ENCODE measurements at regions of chr15 and their contacts with region 1.

Region 1: GRCh38 chr15:77543159-77543882 is 89.4 kb downstream of the LINGO1 start:
- DNase-seq: peak; percentile 54 to 85 (median 66)
- ATAC-seq: peak; percentile 94
- H3K4me3 ChIP-seq: peak overlapping the region; percentile 65
- H3K4me3 Mint-ChIP-seq: peak overlapping the region; percentile 80
- H3K27ac ChIP-seq: no peak overlapping the region
- H3K27ac Mint-ChIP-seq: no peak overlapping the region
- H3K4me1 ChIP-seq: peaks cover 13% of the 10 kb centered on the region
- H3K4me1 Mint-ChIP-seq: peaks cover 5% of the 10 kb centered on the region
- H3K27me3 ChIP-seq: no peaks in the 10 kb centered on the region
- H3K27me3 Mint-ChIP-seq: no peaks in the 10 kb centered on the region
- CTCF ChIP-seq: peak; percentile 88

Region 2: GRCh38 chr15:76190834-76191538 is 1352.3 kb before region 1 on chr15:
- CTCF ChIA-PET with region 1: no interaction called
- POLR2A ChIA-PET with region 1: no interaction called
- intact Hi-C with region 1: loop called in 1 of 2 experiments (anchors 5 kb)
- DNase-seq: peak; percentile 29 to 74 (median 56)
- ATAC-seq: peak; percentile 84
- H3K4me3 ChIP-seq: peak overlapping the region; percentile 7
- H3K4me3 Mint-ChIP-seq: no peak overlapping the region
- H3K27ac ChIP-seq: no peak overlapping the region
- H3K27ac Mint-ChIP-seq: no peak overlapping the region
- H3K4me1 ChIP-seq: peaks cover 13% of the 10 kb centered on the region
- H3K4me1 Mint-ChIP-seq: peaks cover 7% of the 10 kb centered on the region
- H3K27me3 ChIP-seq: peaks cover 28% of the 10 kb centered on the region in 2 experiments
- H3K27me3 Mint-ChIP-seq: peaks cover 45% of the 10 kb centered on the region
- CTCF ChIP-seq: peak; percentile 91

Region 3: DNA sequence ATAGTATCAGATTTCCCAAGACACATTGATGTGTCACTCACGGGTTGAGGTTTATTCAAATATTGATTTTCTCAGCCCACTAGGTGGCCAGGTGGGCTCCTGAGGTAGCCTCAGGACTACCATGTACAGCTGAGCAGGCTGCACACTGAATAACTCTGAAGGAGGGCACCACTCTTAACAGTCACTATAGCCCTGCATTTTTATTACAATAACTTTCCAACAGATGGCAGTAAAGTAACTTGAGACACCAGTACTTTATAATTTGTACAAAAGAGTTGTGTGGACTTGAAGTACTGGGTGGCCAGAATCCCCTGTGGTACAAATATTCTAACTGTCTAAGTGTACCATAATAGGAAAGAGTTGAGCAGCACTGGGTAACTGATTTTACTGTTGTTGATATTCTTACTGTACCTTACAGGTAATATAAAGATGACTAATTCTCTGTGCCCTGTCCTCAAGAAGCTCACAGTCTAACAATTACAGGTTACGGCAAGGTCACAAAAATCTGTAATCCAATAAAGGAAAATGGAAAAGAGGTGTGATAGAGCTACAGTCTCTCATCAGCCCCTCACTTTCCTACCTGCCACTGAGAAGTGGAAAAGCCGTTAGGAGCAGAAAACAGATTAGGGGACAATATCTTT is 1308.0 kb before region 1 on chr15:
- CTCF ChIA-PET with region 1: no interaction called
- POLR2A ChIA-PET with region 1: no interaction called
- intact Hi-C with region 1: loop called in 1 of 2 experiments (anchors 5 kb)
- DNase-seq: peak in 3 of 14 experiments; percentile 44 to 52 (median 45)
- ATAC-seq: no peak
- H3K4me3 ChIP-seq: no peak overlapping the region
- H3K4me3 Mint-ChIP-seq: no peak overlapping the region
- H3K27ac ChIP-seq: no peak overlapping the region
- H3K27ac Mint-ChIP-seq: no peak overlapping the region
- H3K4me1 ChIP-seq: no peaks in the 10 kb centered on the region
- H3K4me1 Mint-ChIP-seq: no peaks in the 10 kb centered on the region
- H3K27me3 ChIP-seq: no peaks in the 10 kb centered on the region
- H3K27me3 Mint-ChIP-seq: no peaks in the 10 kb centered on the region
- CTCF ChIP-seq: peak; percentile 62

Region 4: DNA sequence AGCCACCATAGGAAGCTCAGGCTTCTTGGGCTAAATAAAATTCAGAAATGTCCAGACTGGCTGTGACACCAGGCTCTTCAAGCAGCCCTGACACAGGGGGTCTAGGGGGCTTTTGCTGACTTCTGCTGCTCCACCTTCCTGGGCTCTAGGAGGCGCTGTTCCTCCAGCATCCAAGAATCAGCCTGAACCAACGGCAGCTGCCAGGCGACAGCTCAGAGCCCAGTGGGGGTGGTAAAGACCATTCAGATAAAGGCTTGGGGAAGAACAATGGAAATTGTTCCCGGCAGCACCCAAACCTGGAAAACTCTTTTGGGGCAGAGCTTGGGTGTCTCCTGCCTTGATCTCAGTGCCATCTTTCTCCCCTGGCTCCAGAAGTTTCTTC is 570.0 kb before region 1 on chr15:
- CTCF ChIA-PET with region 1: interaction called, 5 read pairs
- POLR2A ChIA-PET with region 1: no interaction called
- intact Hi-C with region 1: loop called in 1 of 2 experiments (anchors 2 kb)
- DNase-seq: peak; percentile 50 to 83 (median 60)
- ATAC-seq: peak; percentile 81
- H3K4me3 ChIP-seq: no peak overlapping the region
- H3K4me3 Mint-ChIP-seq: no peak overlapping the region
- H3K27ac ChIP-seq: no peak overlapping the region
- H3K27ac Mint-ChIP-seq: no peak overlapping the region
- H3K4me1 ChIP-seq: peaks cover 17% of the 10 kb centered on the region
- H3K4me1 Mint-ChIP-seq: no peaks in the 10 kb centered on the region
- H3K27me3 ChIP-seq: no peaks in the 10 kb centered on the region
- H3K27me3 Mint-ChIP-seq: no peaks in the 10 kb centered on the region
- CTCF ChIP-seq: peak; percentile 76

Region 5: DNA sequence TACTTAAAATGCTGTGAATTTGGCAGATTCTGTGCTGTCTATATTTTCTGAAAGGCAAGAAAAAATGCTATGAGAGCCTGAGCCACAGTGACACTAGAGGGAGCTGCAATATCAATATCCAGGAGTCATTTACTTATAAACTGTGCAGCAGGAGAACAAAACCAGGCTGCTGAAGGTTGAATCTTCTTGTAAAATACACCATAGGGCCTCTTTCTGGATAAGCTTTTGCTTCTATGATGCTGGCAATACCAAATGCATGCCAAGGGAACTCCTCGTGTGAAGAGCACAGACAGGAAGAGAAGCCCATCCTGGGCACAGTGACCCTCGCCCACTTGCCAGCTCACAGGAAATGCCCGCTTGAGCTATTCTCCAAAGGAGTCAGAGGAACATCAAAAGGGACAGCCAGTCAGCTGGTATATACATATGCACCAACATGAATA is 424.4 kb before region 1 on chr15:
- CTCF ChIA-PET with region 1: interaction called, 3 read pairs
- POLR2A ChIA-PET with region 1: interaction called, 4 read pairs
- intact Hi-C with region 1: loop called in 1 of 2 experiments (anchors 1 kb)
- DNase-seq: peak in 7 of 14 experiments; percentile 9 to 73 (median 47)
- ATAC-seq: peak; percentile 59
- H3K4me3 ChIP-seq: no peak overlapping the region
- H3K4me3 Mint-ChIP-seq: no peak overlapping the region
- H3K27ac ChIP-seq: no peak overlapping the region
- H3K27ac Mint-ChIP-seq: no peak overlapping the region
- H3K4me1 ChIP-seq: peaks cover 4% of the 10 kb centered on the region
- H3K4me1 Mint-ChIP-seq: no peaks in the 10 kb centered on the region
- H3K27me3 ChIP-seq: no peaks in the 10 kb centered on the region
- H3K27me3 Mint-ChIP-seq: no peaks in the 10 kb centered on the region
- CTCF ChIP-seq: peak; percentile 65

Region 6: GRCh38 chr15:77186594-77187011 is 356.7 kb before region 1 on chr15:
- CTCF ChIA-PET with region 1: interaction called, 6 read pairs
- POLR2A ChIA-PET with region 1: no interaction called
- intact Hi-C with region 1: loop called (anchors 2 kb)
- DNase-seq: peak in 3 of 14 experiments; percentile 35 to 44 (median 40)
- ATAC-seq: no peak
- H3K4me3 ChIP-seq: no peak overlapping the region
- H3K4me3 Mint-ChIP-seq: no peak overlapping the region
- H3K27ac ChIP-seq: no peak overlapping the region
- H3K27ac Mint-ChIP-seq: no peak overlapping the region
- H3K4me1 ChIP-seq: peaks cover 7% of the 10 kb centered on the region
- H3K4me1 Mint-ChIP-seq: peaks cover 33% of the 10 kb centered on the region
- H3K27me3 ChIP-seq: no peaks in the 10 kb centered on the region
- H3K27me3 Mint-ChIP-seq: no peaks in the 10 kb centered on the region
- CTCF ChIP-seq: peak; percentile 16

Region 7: DNA sequence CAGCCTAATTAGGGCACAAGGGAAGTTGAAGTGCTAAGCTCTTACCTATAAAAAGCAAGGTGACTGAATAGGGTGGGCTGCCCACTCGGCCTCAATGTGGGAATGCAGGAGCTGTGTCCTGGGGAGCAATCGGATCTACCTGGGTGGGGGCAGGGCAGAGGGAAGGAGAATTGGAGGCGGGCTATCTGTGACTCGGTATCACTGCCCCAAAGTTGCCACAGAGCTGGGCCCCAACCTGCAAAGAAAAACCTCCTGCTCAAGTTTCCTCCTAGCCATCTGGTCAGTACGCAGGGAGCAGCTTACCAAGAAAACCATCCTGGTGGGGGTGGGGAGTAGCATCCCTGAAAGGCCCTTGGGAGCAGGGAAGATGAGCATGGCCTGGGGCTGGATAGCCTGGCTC is 577.2 kb after region 1 on chr15:
- CTCF ChIA-PET with region 1: no interaction called
- POLR2A ChIA-PET with region 1: no interaction called
- intact Hi-C with region 1: no loop called
- DNase-seq: no peak
- ATAC-seq: no peak
- H3K4me3 ChIP-seq: no peak overlapping the region
- H3K4me3 Mint-ChIP-seq: no peak overlapping the region
- H3K27ac ChIP-seq: no peak overlapping the region
- H3K27ac Mint-ChIP-seq: no peak overlapping the region
- H3K4me1 ChIP-seq: no peaks in the 10 kb centered on the region
- H3K4me1 Mint-ChIP-seq: no peaks in the 10 kb centered on the region
- H3K27me3 ChIP-seq: no peaks in the 10 kb centered on the region
- H3K27me3 Mint-ChIP-seq: no peaks in the 10 kb centered on the region
- CTCF ChIP-seq: no peak